ENCODE measurements at regions of chr12 and their contacts with region 1.

Region 1: DNA sequence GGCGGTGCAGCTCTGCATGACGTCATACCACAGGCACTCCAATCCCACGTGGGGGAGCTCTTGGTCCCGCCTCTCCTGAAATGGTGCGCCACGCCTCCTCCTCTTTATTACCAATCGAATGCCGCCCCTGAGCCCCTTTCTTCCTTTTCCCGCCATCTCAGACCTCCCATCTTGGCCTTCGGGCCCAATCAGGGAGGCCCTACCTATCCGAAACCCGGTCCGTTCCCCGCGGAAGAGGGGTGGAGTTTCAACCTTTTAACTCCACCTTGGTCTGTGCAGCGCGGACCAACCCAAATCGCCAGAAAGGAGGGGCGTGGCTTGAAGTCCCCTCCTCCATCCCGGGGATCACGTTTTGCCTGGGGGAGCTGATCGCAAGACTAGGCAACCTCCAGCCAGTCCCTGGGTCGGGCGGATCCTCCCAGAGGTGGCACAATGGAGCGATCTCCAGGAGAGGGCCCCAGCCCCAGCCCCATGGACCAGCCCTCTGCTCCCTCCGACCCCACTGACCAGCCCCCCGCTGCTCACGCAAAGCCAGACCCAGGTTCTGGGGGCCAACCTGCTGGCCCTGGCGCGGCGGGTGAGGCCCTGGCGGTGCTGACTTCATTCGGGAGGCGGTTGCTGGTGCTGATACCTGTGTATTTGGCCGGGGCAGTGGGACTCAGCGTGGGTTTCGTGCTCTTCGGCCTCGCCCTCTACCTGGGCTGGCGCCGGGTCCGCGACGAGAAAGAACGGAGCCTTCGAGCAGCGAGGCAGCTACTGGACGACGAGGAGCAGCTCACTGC is at the start of gene ESYT1:
- DNase-seq: peak; percentile 94 to 100 (median 96)
- ATAC-seq: peak; percentile 87
- H3K4me3 ChIP-seq: peak within 1 kb of the TSS; percentile 71 to 97
- H3K4me3 Mint-ChIP-seq: peak within 1 kb of the TSS; percentile 97
- H3K27ac ChIP-seq: peak within 1 kb of the TSS; percentile 79 to 86
- H3K27ac Mint-ChIP-seq: peak within 1 kb of the TSS; percentile 94
- H3K4me1 ChIP-seq: peaks cover 60% of the 10 kb centered on the region
- H3K4me1 Mint-ChIP-seq: peaks cover 64% of the 10 kb centered on the region
- H3K27me3 ChIP-seq: no peaks in the 10 kb centered on the region
- H3K27me3 Mint-ChIP-seq: no peaks in the 10 kb centered on the region
- CTCF ChIP-seq: no peak
- total RNA-seq, gene ESYT1: 82.4 to 83.0 TPM

Region 2: GRCh38 chr12:55817346-55818139 is 310.5 kb before region 1 on chr12 and contains the starts of genes ORMDL2 and SARNP:
- CTCF ChIA-PET with region 1: no interaction called
- POLR2A ChIA-PET with region 1: no interaction called
- intact Hi-C with region 1: loop called in 1 of 2 experiments (anchors 5 kb)
- DNase-seq: peak; percentile 88 to 100 (median 94)
- ATAC-seq: peak; percentile 91
- H3K4me3 ChIP-seq: peak within 1 kb of the TSS; percentile 81 to 89
- H3K4me3 Mint-ChIP-seq: no peak within 1 kb of the TSS
- H3K27ac ChIP-seq: peak within 1 kb of the TSS; percentile 81 to 89
- H3K27ac Mint-ChIP-seq: no peak within 1 kb of the TSS
- H3K4me1 ChIP-seq: peaks cover 38% of the 10 kb centered on the region
- H3K4me1 Mint-ChIP-seq: peaks cover 44% of the 10 kb centered on the region
- H3K27me3 ChIP-seq: no peaks in the 10 kb centered on the region
- H3K27me3 Mint-ChIP-seq: no peaks in the 10 kb centered on the region
- CTCF ChIP-seq: no peak
- total RNA-seq, gene ORMDL2: 13.2 to 15.1 TPM
- total RNA-seq, gene SARNP: 48.0 to 50.3 TPM

Region 3: GRCh38 chr12:56152318-56153033 is 24.4 kb after region 1 on chr12 and contains the start of gene MYL6B:
- CTCF ChIA-PET with region 1: interaction called, 24 read pairs
- POLR2A ChIA-PET with region 1: interaction called, 31 read pairs
- intact Hi-C with region 1: loop called (anchors 1 kb)
- DNase-seq: peak; percentile 80 to 96 (median 93)
- ATAC-seq: peak; percentile 90
- H3K4me3 ChIP-seq: peak within 1 kb of the TSS; percentile 65 to 95
- H3K4me3 Mint-ChIP-seq: peak within 1 kb of the TSS; percentile 90
- H3K27ac ChIP-seq: peak within 1 kb of the TSS; percentile 75 to 90
- H3K27ac Mint-ChIP-seq: peak within 1 kb of the TSS; percentile 99
- H3K4me1 ChIP-seq: peaks cover 30% of the 10 kb centered on the region
- H3K4me1 Mint-ChIP-seq: peaks cover 29% of the 10 kb centered on the region
- H3K27me3 ChIP-seq: no peaks in the 10 kb centered on the region
- H3K27me3 Mint-ChIP-seq: no peaks in the 10 kb centered on the region
- CTCF ChIP-seq: no peak
- total RNA-seq, gene MYL6B: 4.0 to 5.9 TPM

Region 4: GRCh38 chr12:56258057-56258819 is 130.2 kb after region 1 on chr12 and contains the start of gene ANKRD52:
- CTCF ChIA-PET with region 1: interaction called, 10 read pairs
- POLR2A ChIA-PET with region 1: interaction called, 3 read pairs
- intact Hi-C with region 1: loop called in 1 of 2 experiments (anchors 2 kb)
- DNase-seq: peak; percentile 61 to 92 (median 77)
- ATAC-seq: peak; percentile 95
- H3K4me3 ChIP-seq: peak within 1 kb of the TSS; percentile 79 to 99
- H3K4me3 Mint-ChIP-seq: peak within 1 kb of the TSS; percentile 94
- H3K27ac ChIP-seq: peak within 1 kb of the TSS; percentile 77
- H3K27ac Mint-ChIP-seq: peak within 1 kb of the TSS; percentile 88
- H3K4me1 ChIP-seq: peaks cover 21% of the 10 kb centered on the region
- H3K4me1 Mint-ChIP-seq: peaks cover 21% of the 10 kb centered on the region
- H3K27me3 ChIP-seq: no peaks in the 10 kb centered on the region
- H3K27me3 Mint-ChIP-seq: no peaks in the 10 kb centered on the region
- CTCF ChIP-seq: peak; percentile 64
- total RNA-seq, gene ANKRD52: 27.7 to 29.9 TPM

Region 5: DNA sequence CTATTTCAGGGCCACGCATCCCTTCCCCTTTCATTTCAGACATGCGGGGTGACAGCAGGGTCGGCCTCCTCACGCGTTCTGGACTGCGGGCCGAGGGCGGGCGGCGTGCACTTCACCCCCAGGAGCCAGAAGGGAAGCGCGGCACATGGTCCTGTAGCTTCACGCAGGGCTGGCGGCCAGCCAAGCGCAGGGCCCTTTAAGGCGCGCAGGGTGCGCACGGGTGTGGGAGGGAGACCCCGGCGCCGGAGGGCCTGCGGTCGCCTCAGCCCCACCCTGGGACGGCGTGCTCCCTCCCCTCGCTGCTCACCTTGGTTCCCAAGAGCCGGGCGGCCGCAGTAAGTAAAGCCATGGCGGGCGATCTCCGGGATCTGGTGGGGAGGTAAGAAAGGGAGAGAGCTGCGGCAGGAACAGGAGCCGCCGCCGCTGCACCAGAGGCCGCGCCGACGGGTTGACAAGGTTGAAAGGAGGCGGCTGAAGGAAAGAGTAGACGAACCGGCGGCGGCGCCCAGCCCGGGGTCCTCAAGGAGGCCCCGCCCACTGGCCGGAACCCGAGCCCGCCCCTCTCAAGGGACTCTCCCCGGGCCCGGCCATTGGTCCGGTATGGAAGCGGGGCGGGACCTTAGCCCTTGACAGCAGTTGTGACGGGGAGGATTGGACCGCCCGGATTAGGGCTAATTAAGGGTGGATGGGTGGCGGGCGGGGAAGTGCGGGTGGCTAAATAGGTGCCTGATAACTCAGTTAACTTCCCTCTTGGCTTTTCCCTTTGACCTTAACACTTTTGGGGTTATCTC is 172.0 kb after region 1 on chr12 and contains the start of gene CS:
- CTCF ChIA-PET with region 1: interaction called, 4 read pairs
- POLR2A ChIA-PET with region 1: interaction called, 3 read pairs
- intact Hi-C with region 1: loop called in 1 of 2 experiments (anchors 1 kb)
- DNase-seq: peak; percentile 97 to 99 (median 99)
- ATAC-seq: peak; percentile 95
- H3K4me3 ChIP-seq: peak within 1 kb of the TSS; percentile 67 to 80
- H3K4me3 Mint-ChIP-seq: peak within 1 kb of the TSS; percentile 95
- H3K27ac ChIP-seq: peak within 1 kb of the TSS; percentile 77 to 95
- H3K27ac Mint-ChIP-seq: peak within 1 kb of the TSS; percentile 94
- H3K4me1 ChIP-seq: peaks cover 45% of the 10 kb centered on the region
- H3K4me1 Mint-ChIP-seq: peaks cover 55% of the 10 kb centered on the region
- H3K27me3 ChIP-seq: no peaks in the 10 kb centered on the region
- H3K27me3 Mint-ChIP-seq: no peaks in the 10 kb centered on the region
- CTCF ChIP-seq: no peak
- total RNA-seq, gene CS: 154 to 159 TPM